ENCODE measurements at regions of chrX and their contacts with region 1.

Region 1: DNA sequence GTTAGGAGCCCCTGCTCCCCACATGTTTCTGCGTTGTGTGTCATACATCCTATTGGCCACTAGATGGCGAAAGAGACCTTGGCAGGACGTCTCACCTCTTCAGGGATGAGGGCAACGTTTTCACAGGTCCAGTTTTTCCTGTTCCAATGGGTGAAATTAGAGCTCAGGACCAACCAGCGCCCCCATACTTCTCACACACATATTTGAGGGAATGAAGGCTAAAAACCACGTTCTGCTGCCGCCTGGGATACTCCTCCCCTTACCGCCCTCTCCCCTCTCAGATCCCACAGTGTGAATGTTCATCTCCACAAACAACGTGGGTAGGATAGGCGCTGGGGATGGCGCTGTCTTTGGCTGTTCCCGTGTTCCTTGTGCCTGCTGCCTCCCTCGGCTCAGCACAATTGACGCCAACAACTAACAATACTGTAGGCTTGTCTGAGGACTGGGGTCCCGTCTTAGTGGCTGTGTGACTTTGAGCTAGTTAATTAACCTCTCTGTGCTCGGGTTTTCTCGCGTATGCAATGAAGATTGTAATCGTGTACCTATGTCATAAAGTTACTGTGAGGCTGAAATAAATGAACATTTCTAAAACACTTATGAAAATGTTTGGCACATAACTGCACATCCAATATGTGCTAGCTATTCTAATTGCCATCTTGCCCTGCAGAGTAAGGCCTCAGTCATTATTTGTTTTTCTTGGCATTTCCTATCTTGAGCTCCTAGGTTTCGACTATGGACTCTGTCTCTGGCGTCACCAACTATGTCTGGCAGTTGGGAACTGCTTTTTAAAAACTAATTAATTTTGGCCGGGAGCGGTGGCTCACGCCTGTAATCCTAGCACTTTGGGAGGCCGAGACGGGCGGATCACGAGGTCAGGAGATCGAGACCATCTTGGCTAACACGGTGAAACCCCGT is 181.3 kb upstream of the STK26 start:
- DNase-seq: peak; percentile 54
- H3K4me3 ChIP-seq: no peak overlapping the region
- H3K27ac ChIP-seq: no peak overlapping the region
- H3K4me1 ChIP-seq: no peaks in the 10 kb centered on the region
- H3K27me3 ChIP-seq: no peaks in the 10 kb centered on the region
- CTCF ChIP-seq: peak; percentile 87 to 92

Region 2: DNA sequence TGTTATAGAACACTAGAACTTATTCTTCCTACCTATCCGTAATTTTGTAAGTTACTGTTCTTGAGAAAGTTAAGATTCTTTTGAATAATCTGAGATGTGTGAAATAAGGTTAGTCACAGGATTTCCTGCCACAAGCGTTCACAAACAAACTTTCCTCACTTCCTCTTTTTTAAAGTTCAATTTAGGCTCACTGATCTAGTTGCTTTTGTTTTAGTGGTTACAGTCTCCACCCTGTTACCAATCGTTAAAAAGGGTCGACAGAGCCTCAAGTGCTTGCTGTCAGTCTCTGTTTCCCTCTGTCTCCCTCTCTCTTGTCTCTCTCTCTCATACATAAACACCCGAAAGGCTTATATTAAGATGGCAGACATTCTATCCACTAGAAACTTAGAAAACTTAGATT is 145.5 kb after region 1 on chrX:
- CTCF ChIA-PET with region 1: no interaction called
- dilution Hi-C with region 1: no loop called
- in situ Hi-C with region 1: no loop called
- intact Hi-C with region 1: no loop called
- DNase-seq: no peak
- H3K4me3 ChIP-seq: no peak overlapping the region
- H3K27ac ChIP-seq: no peak overlapping the region
- H3K4me1 ChIP-seq: no peaks in the 10 kb centered on the region
- H3K27me3 ChIP-seq: no peaks in the 10 kb centered on the region
- CTCF ChIP-seq: no peak

Region 3: DNA sequence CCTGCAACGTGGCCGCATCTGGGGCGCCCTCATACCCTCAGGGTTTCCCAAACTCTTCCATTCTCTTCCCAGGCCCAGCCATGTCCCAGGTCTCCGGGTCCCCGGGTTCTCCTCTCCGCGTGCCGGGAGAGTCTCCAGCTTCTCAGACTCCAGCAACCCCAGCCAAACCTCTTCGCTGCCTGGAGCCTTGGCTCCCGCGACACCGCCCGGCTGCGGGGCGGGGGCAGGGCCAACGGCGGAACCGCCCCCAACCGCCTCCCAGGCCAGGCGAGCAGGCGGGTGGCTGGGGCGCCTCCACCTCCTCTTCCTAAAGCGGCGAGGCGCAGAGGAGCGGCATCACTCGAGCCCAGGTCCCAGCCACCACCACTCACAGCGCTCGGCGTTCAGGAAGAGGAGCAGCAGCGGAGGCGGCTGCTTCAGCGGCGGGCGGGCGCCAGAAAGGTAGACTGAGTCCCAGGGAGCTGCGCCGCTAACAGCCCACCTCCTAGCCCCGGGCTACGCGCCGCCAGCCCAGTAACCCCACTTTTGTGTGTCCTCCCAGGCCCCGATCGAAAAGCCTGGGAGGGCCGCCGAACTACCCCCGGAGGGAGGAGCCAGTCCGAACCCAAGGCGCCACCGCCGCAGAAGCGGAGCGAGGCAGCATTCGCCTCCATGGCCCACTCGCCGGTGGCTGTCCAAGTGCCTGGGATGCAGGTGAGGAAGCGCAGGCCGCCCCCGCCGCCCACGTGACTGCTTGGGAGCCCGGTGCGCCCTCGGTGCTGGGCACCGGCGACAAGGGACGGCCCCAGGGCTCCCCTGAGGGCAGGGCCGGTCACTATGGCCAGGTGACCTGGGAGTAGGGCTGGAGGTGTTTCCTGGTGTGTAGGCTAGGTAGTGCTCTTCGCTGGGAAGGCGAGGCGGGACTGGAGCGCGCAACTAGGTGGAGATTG is 181.5 kb after region 1 on chrX and contains the start of gene STK26:
- CTCF ChIA-PET with region 1: no interaction called
- dilution Hi-C with region 1: no loop called
- in situ Hi-C with region 1: no loop called
- intact Hi-C with region 1: loop called (anchors 2 kb)
- DNase-seq: peak; percentile 76
- H3K4me3 ChIP-seq: peak within 1 kb of the TSS; percentile 66 to 86 (median 71)
- H3K27ac ChIP-seq: peak within 1 kb of the TSS; percentile 55
- H3K4me1 ChIP-seq: no peaks in the 10 kb centered on the region
- H3K27me3 ChIP-seq: no peaks in the 10 kb centered on the region
- CTCF ChIP-seq: no peak
- total RNA-seq, gene STK26: 45.3 to 72.7 TPM

Region 4: GRCh38 chrX:132071260-132071659 is 229.5 kb after region 1 on chrX:
- CTCF ChIA-PET with region 1: interaction called, 3 read pairs
- dilution Hi-C with region 1: no loop called
- in situ Hi-C with region 1: no loop called
- intact Hi-C with region 1: loop called (anchors 1 kb)
- DNase-seq: peak; percentile 7
- H3K4me3 ChIP-seq: no peak overlapping the region
- H3K27ac ChIP-seq: no peak overlapping the region
- H3K4me1 ChIP-seq: no peaks in the 10 kb centered on the region
- H3K27me3 ChIP-seq: no peaks in the 10 kb centered on the region
- CTCF ChIP-seq: peak; percentile 22 to 43

Region 5: DNA sequence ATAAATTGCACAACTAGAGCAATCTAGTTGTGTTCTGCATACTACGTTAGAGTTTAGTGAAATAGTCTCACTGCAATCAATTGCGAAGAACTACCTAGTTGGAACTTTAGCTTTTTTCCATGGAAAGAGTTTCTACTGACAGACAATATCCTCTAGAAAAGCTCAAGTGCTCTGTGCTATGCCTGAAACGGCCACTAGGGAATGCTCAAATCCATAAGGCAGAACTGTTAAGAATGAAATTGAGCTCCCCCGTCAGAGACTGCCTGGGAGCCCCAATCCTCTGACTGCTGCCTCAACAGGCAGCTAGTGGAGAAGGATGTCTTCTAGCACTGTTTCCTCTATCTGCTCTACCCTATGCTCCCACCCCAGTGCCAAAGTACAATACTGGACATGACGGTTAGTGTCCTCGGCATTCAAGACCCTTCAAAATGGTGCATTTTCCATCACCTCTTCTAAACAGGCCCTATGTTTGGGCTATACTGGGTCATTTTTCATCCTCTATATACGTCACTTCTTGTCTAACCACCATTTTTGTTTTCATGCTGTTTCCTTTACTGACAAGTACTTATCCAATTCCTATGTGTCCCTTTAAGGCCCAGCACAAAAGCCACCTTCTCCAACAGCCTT is 250.8 kb after region 1 on chrX:
- CTCF ChIA-PET with region 1: no interaction called
- dilution Hi-C with region 1: no loop called
- in situ Hi-C with region 1: no loop called
- intact Hi-C with region 1: loop called (anchors 5 kb)
- DNase-seq: peak; percentile 54
- H3K4me3 ChIP-seq: no peak overlapping the region
- H3K27ac ChIP-seq: no peak overlapping the region
- H3K4me1 ChIP-seq: no peaks in the 10 kb centered on the region
- H3K27me3 ChIP-seq: peaks cover 1% of the 10 kb centered on the region
- CTCF ChIP-seq: peak; percentile 89 to 90

Region 6: GRCh38 chrX:132292793-132293192 is 451.0 kb after region 1 on chrX:
- CTCF ChIA-PET with region 1: no interaction called
- dilution Hi-C with region 1: no loop called
- in situ Hi-C with region 1: no loop called
- intact Hi-C with region 1: loop called (anchors 10 kb)
- DNase-seq: peak; percentile 49
- H3K4me3 ChIP-seq: no peak overlapping the region
- H3K27ac ChIP-seq: no peak overlapping the region
- H3K4me1 ChIP-seq: no peaks in the 10 kb centered on the region
- H3K27me3 ChIP-seq: no peaks in the 10 kb centered on the region
- CTCF ChIP-seq: peak; percentile 52 to 75